Activated T-helper 2 cell treated with anti-CD3 and anti-CD28 coated beads, Interferon-gamma antibody, Interleukin-2, Interleukin-4, amounts not matched to agents 10 μg/mL and 5 μg/mL and 100 μg/mL, durations not matched to agents 14 hours and 24 hours and 36 hours (primary cell): ENCODE measurements at regions of chr11 and their contacts with region 1.

Region 1: DNA sequence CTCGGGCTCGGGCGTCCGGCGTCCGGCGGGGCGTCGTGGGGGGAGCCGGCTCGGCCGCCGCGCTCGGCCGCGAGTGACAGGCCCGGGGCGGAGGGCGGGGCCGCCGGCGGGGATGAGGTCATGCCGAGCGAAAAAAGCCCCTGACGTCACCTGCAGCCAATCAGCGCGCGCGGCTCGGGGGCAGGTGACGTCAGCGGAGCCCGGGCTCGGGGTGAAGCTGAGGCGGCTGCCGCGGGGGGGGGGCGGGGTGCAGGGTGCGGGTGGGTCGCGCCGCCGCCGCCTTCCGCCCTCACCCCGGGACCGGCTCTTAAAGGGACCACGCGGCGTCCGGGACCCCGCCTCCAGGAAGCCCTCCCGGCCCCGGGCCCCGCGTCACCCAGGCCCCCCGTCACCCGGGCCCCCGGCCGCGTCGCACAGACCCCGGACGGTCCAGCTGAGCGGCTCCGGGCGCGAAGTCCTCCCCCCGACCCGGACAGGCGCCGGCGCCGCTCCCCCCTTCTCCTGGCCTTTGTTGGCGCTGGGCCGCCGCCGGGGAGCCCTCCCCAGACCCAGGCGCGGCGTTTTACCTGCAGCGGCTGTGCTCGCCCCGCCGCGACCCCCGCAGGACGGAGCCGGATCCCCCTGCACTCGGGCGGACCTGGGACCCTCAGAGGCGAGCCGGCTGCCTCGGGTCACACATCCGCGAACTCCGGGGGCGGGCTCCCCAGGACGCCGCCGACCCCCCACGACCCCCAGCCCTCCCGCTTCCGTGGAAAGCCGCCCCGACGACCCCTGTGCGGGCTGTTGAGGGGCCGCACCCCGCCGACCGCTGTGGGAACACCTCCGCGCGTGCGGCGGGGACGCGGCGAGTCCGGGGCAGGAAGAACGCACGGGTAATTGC is at the start of gene DUSP8:
- DNase-seq: peak; percentile 86
- H3K4me3 Mint-ChIP-seq: peak within 1 kb of the TSS; percentile 17
- H3K27ac Mint-ChIP-seq: no peak within 1 kb of the TSS
- H3K4me1 Mint-ChIP-seq: no peaks in the 10 kb centered on the region
- H3K27me3 Mint-ChIP-seq: peaks cover 36% of the 10 kb centered on the region
- total RNA-seq, gene DUSP8: 1.2 and 1.8 TPM in 2 replicates

Region 2: GRCh38 chr11:1202776-1203504 is 369.5 kb before region 1 on chr11:
- intact Hi-C with region 1: loop called (anchors 5 kb)
- DNase-seq: peak; percentile 42
- H3K4me3 Mint-ChIP-seq: no peak overlapping the region
- H3K27ac Mint-ChIP-seq: no peak overlapping the region
- H3K4me1 Mint-ChIP-seq: no peaks in the 10 kb centered on the region
- H3K27me3 Mint-ChIP-seq: no peaks in the 10 kb centered on the region

Region 3: GRCh38 chr11:1534682-1535081 is 37.8 kb before region 1 on chr11:
- intact Hi-C with region 1: loop called (anchors 5 kb)
- DNase-seq: no peak
- H3K4me3 Mint-ChIP-seq: no peak overlapping the region
- H3K27ac Mint-ChIP-seq: no peak overlapping the region
- H3K4me1 Mint-ChIP-seq: peaks cover 3% of the 10 kb centered on the region
- H3K27me3 Mint-ChIP-seq: peaks cover 3% of the 10 kb centered on the region

Region 4: GRCh38 chr11:1548221-1549070 is 24.0 kb before region 1 on chr11:
- intact Hi-C with region 1: loop called (anchors 2 kb)
- DNase-seq: no peak
- H3K4me3 Mint-ChIP-seq: no peak overlapping the region
- H3K27ac Mint-ChIP-seq: no peak overlapping the region
- H3K4me1 Mint-ChIP-seq: no peaks in the 10 kb centered on the region
- H3K27me3 Mint-ChIP-seq: peaks cover 36% of the 10 kb centered on the region

Region 5: GRCh38 chr11:1586699-1587098 is 14.3 kb after region 1 on chr11:
- intact Hi-C with region 1: no loop called
- DNase-seq: no peak
- H3K4me3 Mint-ChIP-seq: no peak overlapping the region
- H3K27ac Mint-ChIP-seq: no peak overlapping the region
- H3K4me1 Mint-ChIP-seq: peaks cover 4% of the 10 kb centered on the region
- H3K27me3 Mint-ChIP-seq: peaks cover 11% of the 10 kb centered on the region

Region 6: DNA sequence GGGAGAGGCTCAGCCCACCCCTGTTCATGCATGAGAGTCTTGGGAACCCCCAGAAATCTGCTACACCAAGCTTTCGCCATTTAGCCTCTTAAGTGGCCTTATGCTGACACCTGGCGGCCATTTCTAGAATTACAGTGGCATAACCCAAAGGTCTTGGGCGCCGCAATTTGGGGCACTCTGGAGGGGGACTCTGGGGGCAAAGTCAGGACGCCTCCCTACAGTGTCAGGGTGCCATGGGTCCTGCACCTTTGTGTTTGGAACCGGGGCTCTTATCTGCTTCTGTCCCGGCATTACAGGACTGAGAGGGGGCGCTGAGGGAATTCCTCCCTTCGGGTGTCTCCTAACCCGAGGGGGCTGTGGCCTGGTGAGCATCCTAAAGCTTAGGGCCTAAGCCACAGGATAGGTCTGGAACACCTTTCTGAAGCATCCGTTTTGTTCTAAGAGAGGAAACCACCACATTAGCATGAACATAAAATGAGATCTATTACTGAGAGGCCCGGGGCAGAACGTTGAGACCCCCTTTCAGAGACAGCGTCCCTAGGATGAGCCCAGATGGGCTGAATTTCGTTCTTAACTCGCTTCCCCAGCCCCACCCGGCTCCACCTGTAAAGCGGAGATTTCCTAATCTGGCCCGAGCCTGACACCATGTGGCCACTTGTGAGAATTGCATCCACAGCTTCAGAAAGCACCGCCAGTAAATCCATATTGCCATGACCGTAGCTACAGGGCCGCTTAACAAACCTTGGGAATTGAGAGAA is 579.2 kb after region 1 on chr11:
- intact Hi-C with region 1: loop called (anchors 10 kb)
- DNase-seq: peak; percentile 61
- H3K4me3 Mint-ChIP-seq: no peak overlapping the region
- H3K27ac Mint-ChIP-seq: no peak overlapping the region
- H3K4me1 Mint-ChIP-seq: peaks cover 13% of the 10 kb centered on the region
- H3K27me3 Mint-ChIP-seq: peaks cover 32% of the 10 kb centered on the region